Body of pancreas (tissue), 4 donors: ENCODE measurements at regions of chr11 and their contacts with region 1.

Region 1: GRCh38 chr11:95156916-95157541 is 67.4 kb downstream of the ENDOD1 start:
- DNase-seq: peak in 1 of 4 donors; percentile 14
- ATAC-seq: peak; percentile 34
- H3K4me3 ChIP-seq: no peak overlapping the region
- H3K27ac ChIP-seq: no peak overlapping the region
- H3K4me1 ChIP-seq: no peaks in the 10 kb centered on the region
- H3K27me3 ChIP-seq: no peaks in the 10 kb centered on the region
- CTCF ChIP-seq: no peak
- POLR2A ChIP-seq: no peak

Region 2: DNA sequence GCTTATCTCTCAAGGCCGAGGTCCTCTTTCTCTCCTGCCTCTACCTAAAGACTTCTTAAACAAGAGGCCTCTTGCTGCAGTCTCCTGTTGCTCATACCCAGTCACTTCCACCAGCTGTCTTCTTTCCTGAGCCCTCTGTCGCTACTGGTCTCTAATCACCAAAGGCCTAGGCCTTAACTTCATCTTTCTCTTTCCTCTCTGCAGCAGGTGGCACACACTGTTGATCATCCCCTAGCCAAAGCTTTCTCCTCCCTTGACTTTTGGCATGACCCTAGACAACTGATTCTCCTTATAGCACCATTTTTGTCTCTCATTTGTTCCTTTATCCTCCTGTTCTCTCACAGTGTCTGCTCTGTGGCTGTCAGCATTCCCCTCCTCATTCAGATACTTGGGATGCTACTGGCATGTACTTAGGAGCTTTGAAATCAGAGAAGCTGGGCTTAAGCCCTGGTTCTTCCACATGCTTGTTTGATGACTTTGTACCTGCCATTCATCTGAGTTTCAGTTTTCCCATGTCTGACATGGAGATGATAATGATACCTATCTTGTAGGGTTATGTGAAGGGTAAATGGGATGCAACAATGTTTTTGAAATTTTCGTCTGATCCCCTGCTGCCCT is 45.0 kb before region 1 on chr11:
- intact Hi-C with region 1: no loop called
- DNase-seq: no peak
- ATAC-seq: no peak
- H3K4me3 ChIP-seq: no peak overlapping the region
- H3K27ac ChIP-seq: no peak overlapping the region
- H3K4me1 ChIP-seq: no peaks in the 10 kb centered on the region
- H3K27me3 ChIP-seq: no peaks in the 10 kb centered on the region
- CTCF ChIP-seq: no peak
- POLR2A ChIP-seq: no peak

Region 3: DNA sequence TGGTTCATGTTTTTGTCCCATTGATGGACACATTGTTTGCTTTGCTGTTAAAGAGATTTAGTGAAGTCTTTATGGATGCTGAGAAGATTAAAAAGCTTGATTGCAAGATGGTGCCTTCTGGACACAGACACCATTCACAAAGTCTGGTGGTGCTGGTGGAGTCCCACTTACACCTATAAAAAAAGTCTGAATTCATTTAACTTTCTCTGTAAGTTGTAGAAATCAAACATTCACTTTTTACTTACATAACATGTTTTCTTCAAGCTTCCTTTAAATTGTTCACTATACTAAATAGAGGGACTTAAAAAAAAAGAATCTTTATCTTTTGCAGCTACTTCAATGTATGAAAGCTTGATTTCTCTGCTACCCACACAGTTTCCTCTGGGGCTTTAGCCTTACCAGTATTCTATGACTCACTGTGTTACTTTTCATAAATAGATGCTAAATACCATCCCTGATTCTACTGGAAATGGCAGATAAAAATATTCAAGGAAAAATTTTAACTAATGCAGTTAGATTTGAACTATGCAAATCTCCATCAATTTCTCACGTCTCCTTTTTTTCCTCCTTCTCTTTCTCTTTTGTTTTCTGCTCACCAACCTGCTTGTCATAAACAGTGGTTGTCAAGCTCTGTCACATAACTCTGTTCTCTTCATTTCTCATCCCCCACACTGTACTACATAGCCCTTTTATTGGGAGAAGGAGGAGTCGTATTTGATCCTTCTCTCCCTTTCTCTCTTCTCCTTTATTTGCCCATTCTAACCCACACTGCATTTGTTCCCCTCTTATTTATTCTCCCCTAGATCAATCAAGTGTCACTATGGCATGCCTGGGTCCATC is 542.8 kb after region 1 on chr11:
- intact Hi-C with region 1: loop called (anchors 5 kb)
- DNase-seq: no peak
- ATAC-seq: no peak
- H3K4me3 ChIP-seq: no peak overlapping the region
- H3K27ac ChIP-seq: no peak overlapping the region
- H3K4me1 ChIP-seq: peaks cover 3% of the 10 kb centered on the region
- H3K27me3 ChIP-seq: no peaks in the 10 kb centered on the region
- CTCF ChIP-seq: no peak
- POLR2A ChIP-seq: no peak